HAP-1 (cell line): ENCODE measurements at regions of chr6 and their contacts with region 1.

Region 1: GRCh38 chr6:116279260-116280063 is at the start of gene TSPYL1:
- DNase-seq: peak; percentile 93 to 95
- H3K4me3 ChIP-seq: peak within 1 kb of the TSS; percentile 78
- H3K4me1 ChIP-seq: peaks cover 31% of the 10 kb centered on the region
- H3K27me3 ChIP-seq: 0 out of 2 replicates have a peak, but pooled peaks cover 5% of the 10 kb centered on the region

Region 2: DNA sequence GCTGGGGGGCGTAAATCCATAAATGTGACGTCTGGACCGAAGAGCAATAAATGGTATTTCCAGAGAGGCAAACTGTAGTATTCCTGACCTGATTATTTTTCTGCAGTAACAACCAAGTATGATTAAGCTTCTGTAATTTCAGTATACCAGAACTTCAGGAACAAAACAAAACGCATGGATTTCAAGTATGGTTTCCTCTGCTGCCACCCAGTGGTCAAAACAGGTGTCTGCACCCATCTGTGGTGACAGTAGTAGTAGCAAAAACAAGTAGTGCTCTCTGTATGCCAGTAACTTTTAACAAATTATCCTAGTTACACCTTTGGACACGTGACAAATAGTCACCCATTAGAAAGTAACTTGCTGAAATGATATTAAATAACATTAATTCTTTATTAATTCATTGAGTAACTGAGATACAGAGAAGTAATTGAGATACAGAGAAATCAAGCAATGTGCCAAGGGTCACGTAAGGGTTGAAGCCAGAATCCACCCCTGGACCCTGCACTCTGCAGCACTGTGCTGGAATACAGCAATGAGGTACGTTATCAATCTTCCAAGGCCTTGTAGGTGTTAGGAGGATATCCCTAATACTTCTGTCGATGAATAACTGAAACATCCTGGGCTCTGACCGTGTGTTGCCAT is 282.0 kb after region 1 on chr6:
- in situ Hi-C with region 1: loop called (anchors 10 kb)
- DNase-seq: peak; percentile 73 to 80
- H3K4me3 ChIP-seq: no peak overlapping the region
- H3K4me1 ChIP-seq: no peaks in the 10 kb centered on the region
- H3K27me3 ChIP-seq: peaks cover 6% of the 10 kb centered on the region; the same call in 1 of the 2 replicates

Region 3: GRCh38 chr6:116667623-116668022 is 388.2 kb after region 1 on chr6:
- in situ Hi-C with region 1: loop called (anchors 25 kb)
- DNase-seq: no peak
- H3K4me3 ChIP-seq: peak overlapping the region; percentile 80
- H3K4me1 ChIP-seq: peaks cover 21% of the 10 kb centered on the region
- H3K27me3 ChIP-seq: peaks cover 2% of the 10 kb centered on the region; the same call in 1 of the 2 replicates

Region 4: GRCh38 chr6:117354671-117355070 is 1075.2 kb after region 1 on chr6:
- in situ Hi-C with region 1: no loop called
- DNase-seq: no peak
- H3K4me3 ChIP-seq: no peak overlapping the region
- H3K4me1 ChIP-seq: no peaks in the 10 kb centered on the region
- H3K27me3 ChIP-seq: peaks cover 5% of the 10 kb centered on the region; the same call in 1 of the 2 replicates